ENCODE measurements at regions of chr14 and their contacts with region 1.

Region 1: DNA sequence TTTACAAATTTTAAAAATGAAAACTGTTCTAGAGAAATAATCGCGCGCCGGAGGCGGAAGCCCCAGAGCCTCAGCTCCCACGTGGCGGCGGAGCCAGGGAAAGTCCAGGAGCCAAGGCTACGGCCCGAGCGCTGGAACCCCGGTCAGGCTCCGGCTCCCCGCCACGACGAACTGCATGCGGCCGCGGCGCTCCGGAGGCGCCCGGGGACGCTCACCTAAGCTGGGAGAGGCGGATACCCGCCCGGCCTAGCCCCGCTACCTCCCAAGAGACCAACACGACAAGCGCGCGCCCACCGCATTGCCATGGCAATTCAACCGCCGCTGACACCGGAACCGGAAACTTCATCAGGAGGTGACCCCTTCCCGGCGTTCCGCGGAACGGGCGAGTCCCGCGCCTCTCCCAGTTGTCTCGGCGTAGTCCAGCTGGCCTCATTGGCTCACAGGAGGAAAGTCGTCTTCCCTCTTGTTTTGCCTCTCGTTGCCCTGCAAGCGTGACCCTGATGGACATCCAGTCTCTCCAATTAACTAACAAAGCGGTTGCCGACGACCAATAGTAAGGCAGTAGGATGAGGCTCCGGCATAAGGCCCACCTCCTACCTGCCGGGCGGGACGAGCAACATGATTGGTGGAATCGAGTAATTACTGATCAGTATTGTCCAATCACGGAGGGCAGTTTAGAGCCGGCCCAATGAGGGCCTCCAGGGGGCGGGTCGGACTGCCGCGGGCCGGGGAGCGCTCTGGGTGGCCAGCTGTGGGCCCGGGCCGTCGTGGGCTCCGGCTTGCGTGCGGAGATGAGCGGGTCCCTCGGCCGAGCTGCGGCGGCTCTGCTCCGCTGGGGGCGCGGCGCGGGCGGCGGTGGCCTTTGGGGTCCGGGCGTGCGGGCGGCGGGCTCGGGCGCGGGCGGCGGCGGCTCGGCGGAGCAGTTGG is at the start of gene GLRX5:
- DNase-seq: peak; percentile 99
- H3K4me3 Mint-ChIP-seq: peak within 1 kb of the TSS; percentile 91
- H3K27ac Mint-ChIP-seq: peak within 1 kb of the TSS; percentile 95
- H3K4me1 Mint-ChIP-seq: peaks cover 49% of the 10 kb centered on the region
- H3K27me3 Mint-ChIP-seq: no peaks in the 10 kb centered on the region
- total RNA-seq, gene GLRX5: 43.7 and 45.6 TPM in 2 replicates

Region 2: GRCh38 chr14:95157327-95158189 is 377.0 kb before region 1 on chr14 and contains the start of gene DICER1:
- intact Hi-C with region 1: loop called (anchors 1 kb)
- DNase-seq: peak; percentile 99
- H3K4me3 Mint-ChIP-seq: peak within 1 kb of the TSS; percentile 91
- H3K27ac Mint-ChIP-seq: peak within 1 kb of the TSS; percentile 97
- H3K4me1 Mint-ChIP-seq: peaks cover 30% of the 10 kb centered on the region
- H3K27me3 Mint-ChIP-seq: no peaks in the 10 kb centered on the region
- total RNA-seq, gene DICER1: 74.4 and 77.0 TPM in 2 replicates

Region 3: DNA sequence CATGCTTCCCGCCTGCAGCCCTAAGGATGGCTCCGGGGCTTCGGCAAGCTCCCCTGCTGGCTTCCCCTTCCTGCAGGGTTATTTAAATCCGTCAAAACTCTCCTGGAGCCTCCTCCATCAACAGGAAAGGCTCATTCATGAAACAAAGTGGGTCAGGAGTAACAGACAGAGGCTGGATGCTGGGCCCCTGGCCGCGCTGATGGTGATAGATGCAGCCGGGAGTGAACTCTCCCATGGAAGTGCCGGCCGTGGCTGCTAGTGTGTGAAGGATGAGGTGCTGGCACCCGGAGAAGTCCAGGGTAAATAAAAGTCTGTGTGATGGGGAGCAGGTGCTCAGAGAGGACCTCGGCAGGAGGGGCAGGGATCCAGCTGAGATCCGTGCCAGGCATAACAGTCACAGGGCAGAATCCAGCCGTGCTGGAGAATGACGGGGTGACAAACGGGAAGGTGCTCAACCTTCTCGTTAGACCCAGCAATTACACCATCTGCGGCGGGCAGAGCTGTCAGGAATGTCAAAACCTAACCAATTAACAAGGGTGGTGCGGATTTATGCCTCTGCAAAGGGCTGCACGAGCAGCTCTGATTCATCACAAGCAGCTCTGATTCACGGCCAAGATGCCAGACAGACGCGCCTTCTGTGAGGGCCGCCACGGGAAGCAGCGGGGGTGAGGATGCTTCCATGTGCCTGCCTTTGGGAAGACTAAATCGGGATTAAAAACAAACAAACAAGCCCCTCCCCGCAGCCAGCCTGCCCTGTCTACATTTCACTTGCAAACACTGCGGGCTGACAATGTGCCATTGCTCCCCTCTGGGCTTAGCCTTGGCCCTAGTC is 73.7 kb before region 1 on chr14:
- intact Hi-C with region 1: loop called (anchors 5 kb)
- DNase-seq: no peak
- H3K4me3 Mint-ChIP-seq: no peak overlapping the region
- H3K27ac Mint-ChIP-seq: no peak overlapping the region
- H3K4me1 Mint-ChIP-seq: peaks cover 34% of the 10 kb centered on the region
- H3K27me3 Mint-ChIP-seq: no peaks in the 10 kb centered on the region

Region 4: GRCh38 chr14:96362965-96363756 is 828.6 kb after region 1 on chr14 and contains the starts of genes ATG2B and GSKIP:
- intact Hi-C with region 1: loop called (anchors 1 kb)
- DNase-seq: peak; percentile 99
- H3K4me3 Mint-ChIP-seq: peak within 1 kb of the TSS; percentile 96
- H3K27ac Mint-ChIP-seq: peak within 1 kb of the TSS; percentile 96
- H3K4me1 Mint-ChIP-seq: peaks cover 33% of the 10 kb centered on the region
- H3K27me3 Mint-ChIP-seq: no peaks in the 10 kb centered on the region
- total RNA-seq, gene ATG2B: 22.8 and 26.1 TPM in 2 replicates
- total RNA-seq, gene GSKIP: 16.3 and 19.3 TPM in 2 replicates

Region 5: DNA sequence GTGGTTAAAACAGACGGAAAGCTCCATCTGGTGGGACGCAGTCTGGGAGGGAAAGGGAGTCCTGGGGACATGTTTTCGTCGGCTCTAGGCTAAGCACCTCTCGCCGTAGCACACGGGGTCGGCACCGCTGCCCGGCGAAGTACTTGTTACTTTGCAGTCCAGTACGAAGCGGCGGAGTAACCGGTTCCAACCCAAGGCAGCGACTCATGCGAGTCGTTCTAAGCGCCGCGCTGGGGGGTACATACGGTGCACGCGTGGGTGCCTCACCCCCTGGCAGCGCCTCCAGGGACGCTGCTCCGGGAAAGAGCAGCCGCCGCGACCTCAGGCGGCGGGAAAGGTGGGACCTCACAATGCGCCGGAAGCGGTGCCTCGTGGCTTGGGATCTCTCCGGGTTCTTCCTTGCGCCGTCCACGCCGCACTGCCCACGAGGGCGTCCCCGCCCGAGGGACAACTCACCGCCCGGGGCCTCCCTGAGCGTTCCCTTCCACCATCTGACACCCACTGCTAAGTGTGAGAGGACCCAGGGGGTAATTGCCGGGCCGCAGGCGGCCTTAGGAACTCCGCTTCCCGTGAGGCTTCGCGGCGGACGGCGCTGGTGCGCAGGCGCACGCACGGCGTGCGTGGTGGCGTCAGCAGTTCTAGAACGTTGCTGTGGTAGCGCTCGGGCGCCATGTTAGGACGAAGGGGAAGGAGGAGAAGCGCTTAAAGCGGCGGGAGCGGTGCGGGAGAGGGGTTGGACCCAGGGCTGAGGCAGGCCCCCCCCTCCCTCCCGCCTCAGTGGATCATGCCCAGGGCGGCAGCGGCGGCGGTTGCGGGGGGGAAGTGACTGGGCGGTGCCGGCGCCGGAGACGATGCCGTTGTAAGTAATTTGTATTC is 967.4 kb after region 1 on chr14 and contains the start of gene PAPOLA:
- intact Hi-C with region 1: loop called (anchors 10 kb)
- DNase-seq: peak; percentile 99
- H3K4me3 Mint-ChIP-seq: peak within 1 kb of the TSS; percentile 91
- H3K27ac Mint-ChIP-seq: peak within 1 kb of the TSS; percentile 99
- H3K4me1 Mint-ChIP-seq: peaks cover 41% of the 10 kb centered on the region
- H3K27me3 Mint-ChIP-seq: peaks cover 17% of the 10 kb centered on the region
- total RNA-seq, gene PAPOLA: 204 and 210 TPM in 2 replicates

Measured in activated CD4-positive, alpha-beta T cell treated with anti-CD3 and anti-CD28 coated beads, Interleukin-2, amount 10 ng/mL, durations not matched to agents 24 days and 14 days (primary cell).